ENCODE measurements at regions of chr22 and their contacts with region 1.

Region 1: GRCh38 chr22:40044102-40044869 is 49.5 kb downstream of the FAM83F start:
- DNase-seq: peak; percentile 99
- H3K4me3 Mint-ChIP-seq: peak overlapping the region; percentile 92
- H3K27ac Mint-ChIP-seq: peak overlapping the region; percentile 97
- H3K4me1 Mint-ChIP-seq: peaks cover 26% of the 10 kb centered on the region
- H3K27me3 Mint-ChIP-seq: peaks cover 7% of the 10 kb centered on the region

Region 2: GRCh38 chr22:39319270-39320022 is 724.8 kb before region 1 on chr22 and contains the start of gene RPL3:
- CTCF ChIA-PET with region 1: interaction called, 3 read pairs
- POLR2A ChIA-PET with region 1: interaction called, 13 read pairs
- DNase-seq: peak; percentile 96
- H3K4me3 Mint-ChIP-seq: peak within 1 kb of the TSS; percentile 95
- H3K27ac Mint-ChIP-seq: peak within 1 kb of the TSS; percentile 96
- H3K4me1 Mint-ChIP-seq: peaks cover 45% of the 10 kb centered on the region
- H3K27me3 Mint-ChIP-seq: no peaks in the 10 kb centered on the region
- total RNA-seq, gene RPL3: 1,526 to 1,529 TPM

Region 3: DNA sequence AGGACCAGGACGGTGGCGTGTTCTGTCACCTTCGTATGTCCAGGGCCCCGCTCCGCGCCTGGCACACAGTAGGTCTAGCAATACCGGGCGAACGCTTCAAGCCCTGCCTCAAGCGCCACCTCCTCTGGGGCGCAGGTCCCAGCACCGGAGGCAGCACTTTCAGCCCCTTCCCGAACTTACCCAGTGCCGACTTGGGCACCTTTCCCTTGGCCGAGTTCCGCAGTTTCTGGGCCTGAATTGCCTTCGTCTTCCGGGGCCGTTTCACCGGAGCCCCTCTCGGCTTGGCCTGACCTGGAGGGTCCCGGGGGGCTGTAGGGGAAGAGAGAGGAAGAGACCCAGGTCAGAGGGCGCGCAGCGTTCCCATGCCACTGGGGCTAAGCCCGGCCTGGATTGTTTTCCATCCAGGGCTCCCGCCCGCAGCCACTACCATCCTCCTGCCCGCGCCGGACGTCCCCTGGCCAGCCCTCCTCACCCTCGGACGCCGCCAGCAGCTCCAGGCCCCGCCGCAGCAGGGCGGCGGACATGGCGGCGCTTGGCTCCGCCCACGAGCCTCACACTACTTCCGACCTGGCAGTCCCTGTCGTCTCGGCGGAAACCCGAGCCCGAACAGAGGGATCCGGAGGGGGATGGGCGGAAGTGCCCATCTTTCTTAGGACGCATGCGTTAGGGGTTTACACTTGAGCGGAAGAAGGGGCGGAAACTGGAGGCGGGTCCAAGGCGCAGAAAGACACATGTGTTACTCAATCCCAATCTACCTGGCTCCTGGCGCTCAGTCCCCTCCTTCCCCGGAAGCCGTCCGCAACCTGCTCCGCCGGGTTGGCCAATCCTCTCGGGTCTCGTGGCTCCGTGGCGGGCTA is 511.8 kb before region 1 on chr22 and contains the start of gene RPS19BP1:
- CTCF ChIA-PET with region 1: interaction called, 59 read pairs
- POLR2A ChIA-PET with region 1: interaction called, 17 read pairs
- DNase-seq: peak; percentile 100
- H3K4me3 Mint-ChIP-seq: peak within 1 kb of the TSS; percentile 94
- H3K27ac Mint-ChIP-seq: peak within 1 kb of the TSS; percentile 86
- H3K4me1 Mint-ChIP-seq: peaks cover 59% of the 10 kb centered on the region
- H3K27me3 Mint-ChIP-seq: no peaks in the 10 kb centered on the region
- total RNA-seq, gene RPS19BP1: 54.3 to 60.7 TPM

Region 4: GRCh38 chr22:39721206-39722031 is 322.9 kb before region 1 on chr22:
- CTCF ChIA-PET with region 1: no interaction called
- POLR2A ChIA-PET with region 1: no interaction called
- DNase-seq: no peak
- H3K4me3 Mint-ChIP-seq: no peak overlapping the region
- H3K27ac Mint-ChIP-seq: no peak overlapping the region
- H3K4me1 Mint-ChIP-seq: peaks cover 17% of the 10 kb centered on the region
- H3K27me3 Mint-ChIP-seq: peaks cover 6% of the 10 kb centered on the region

Region 5: GRCh38 chr22:40015358-40015976 is 28.8 kb before region 1 on chr22:
- CTCF ChIA-PET with region 1: no interaction called
- POLR2A ChIA-PET with region 1: no interaction called
- DNase-seq: no peak
- H3K4me3 Mint-ChIP-seq: no peak overlapping the region
- H3K27ac Mint-ChIP-seq: no peak overlapping the region
- H3K4me1 Mint-ChIP-seq: peaks cover 5% of the 10 kb centered on the region
- H3K27me3 Mint-ChIP-seq: peaks cover 23% of the 10 kb centered on the region

Region 6: GRCh38 chr22:40055143-40055883 is 11.0 kb after region 1 on chr22:
- CTCF ChIA-PET with region 1: interaction called, 13 read pairs
- POLR2A ChIA-PET with region 1: interaction called, 146 read pairs
- DNase-seq: peak; percentile 35
- H3K4me3 Mint-ChIP-seq: peak overlapping the region; percentile 62
- H3K27ac Mint-ChIP-seq: peak overlapping the region; percentile 93
- H3K4me1 Mint-ChIP-seq: peaks cover 75% of the 10 kb centered on the region
- H3K27me3 Mint-ChIP-seq: no peaks in the 10 kb centered on the region

Region 7: DNA sequence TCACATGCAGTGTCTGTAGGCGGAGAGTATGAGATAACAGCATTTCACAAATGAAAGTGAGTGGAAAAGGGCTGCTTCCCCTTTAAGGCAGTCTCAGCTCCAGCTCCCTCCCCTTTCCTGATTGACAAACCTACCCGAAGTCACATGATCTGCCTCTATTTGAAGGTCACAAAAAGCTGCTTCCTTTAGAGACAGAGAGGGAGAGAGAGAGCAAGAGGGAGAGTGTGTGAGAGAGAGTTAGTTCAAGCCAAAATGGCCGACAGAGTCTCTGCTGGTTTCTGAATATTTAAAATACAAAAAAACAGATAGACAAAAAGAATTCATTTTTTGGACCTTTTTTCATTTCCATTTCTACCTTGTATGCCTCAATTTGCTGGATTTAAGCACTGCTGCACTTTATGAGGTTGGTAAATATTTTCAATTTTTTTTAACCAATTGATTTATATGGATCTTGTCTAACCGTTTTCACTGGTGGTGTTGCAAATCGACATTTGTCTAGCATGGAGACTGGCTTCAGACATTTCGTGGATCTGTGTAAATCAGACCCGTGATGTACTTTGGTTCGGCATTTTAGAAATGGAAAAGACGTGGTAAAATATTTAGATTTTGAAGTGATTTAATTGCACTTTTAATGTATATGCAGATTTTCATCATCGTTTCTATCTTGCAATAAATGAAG is 133.6 kb after region 1 on chr22 and contains the start of gene TNRC6B:
- CTCF ChIA-PET with region 1: interaction called, 4 read pairs
- POLR2A ChIA-PET with region 1: interaction called, 142 read pairs
- DNase-seq: peak; percentile 82
- H3K4me3 Mint-ChIP-seq: peak within 1 kb of the TSS; percentile 92
- H3K27ac Mint-ChIP-seq: peak within 1 kb of the TSS; percentile 92
- H3K4me1 Mint-ChIP-seq: peaks cover 49% of the 10 kb centered on the region
- H3K27me3 Mint-ChIP-seq: no peaks in the 10 kb centered on the region
- total RNA-seq, gene TNRC6B: 51.0 to 55.0 TPM

Region 8: GRCh38 chr22:40238425-40239344 is 194.4 kb after region 1 on chr22:
- CTCF ChIA-PET with region 1: no interaction called
- POLR2A ChIA-PET with region 1: interaction called, 14 read pairs
- DNase-seq: peak; percentile 42
- H3K4me3 Mint-ChIP-seq: peak overlapping the region; percentile 7
- H3K27ac Mint-ChIP-seq: peak overlapping the region; percentile 29
- H3K4me1 Mint-ChIP-seq: peaks cover 65% of the 10 kb centered on the region
- H3K27me3 Mint-ChIP-seq: no peaks in the 10 kb centered on the region

Region 9: GRCh38 chr22:40346178-40347118 is 302.2 kb after region 1 on chr22 and contains the start of gene ADSL:
- CTCF ChIA-PET with region 1: interaction called, 49 read pairs
- POLR2A ChIA-PET with region 1: interaction called, 121 read pairs
- DNase-seq: peak; percentile 88
- H3K4me3 Mint-ChIP-seq: peak within 1 kb of the TSS; percentile 88
- H3K27ac Mint-ChIP-seq: peak within 1 kb of the TSS; percentile 96
- H3K4me1 Mint-ChIP-seq: peaks cover 50% of the 10 kb centered on the region
- H3K27me3 Mint-ChIP-seq: no peaks in the 10 kb centered on the region
- total RNA-seq, gene ADSL: 95.0 to 105 TPM

Measured in activated CD4-positive, alpha-beta memory T cell treated with anti-CD3 and anti-CD28 coated beads, Interleukin-2, amount 10 ng/mL, durations not matched to agents 7 days and 5 days (primary cell).